IMR-90 (cell line): ENCODE measurements at regions of chr11 and their contacts with region 1.

Region 1: GRCh38 chr11:8717876-8718753 is 35.5 kb downstream of the RPL27A start:
- DNase-seq: peak; percentile 97
- ATAC-seq: peak; percentile 44
- H3K4me3 ChIP-seq: peak overlapping the region; percentile 19; the same call in 1 of the 2 replicates
- H3K27ac ChIP-seq: peak overlapping the region; percentile 99
- H3K4me1 ChIP-seq: peaks cover 62% of the 10 kb centered on the region
- H3K27me3 ChIP-seq: no peaks in the 10 kb centered on the region
- CTCF ChIP-seq: no peak
- POLR2A ChIP-seq: peak; percentile 60; the same call in 1 of the 2 replicates
- RAD21 ChIP-seq: no peak; the same call in 1 of the 2 replicates

Region 2: GRCh38 chr11:8652140-8652539 is 66.0 kb before region 1 on chr11:
- CTCF ChIA-PET with region 1: no interaction called
- POLR2A ChIA-PET with region 1: no interaction called
- dilution Hi-C with region 1: no loop called
- in situ Hi-C with region 1: no loop called
- intact Hi-C with region 1: loop called (anchors 2 kb)
- DNase-seq: peak; percentile 99
- ATAC-seq: peak; percentile 92
- H3K4me3 ChIP-seq: no peak overlapping the region
- H3K27ac ChIP-seq: no peak overlapping the region
- H3K4me1 ChIP-seq: peaks cover 12% of the 10 kb centered on the region
- H3K27me3 ChIP-seq: no peaks in the 10 kb centered on the region
- CTCF ChIP-seq: no peak
- POLR2A ChIP-seq: no peak
- RAD21 ChIP-seq: no peak

Region 3: GRCh38 chr11:8688414-8689362 is 29.4 kb before region 1 on chr11:
- CTCF ChIA-PET with region 1: interaction called, 4 read pairs
- POLR2A ChIA-PET with region 1: interaction called, 3 read pairs
- dilution Hi-C with region 1: no loop called
- in situ Hi-C with region 1: no loop called
- intact Hi-C with region 1: loop called (anchors 2 kb)
- DNase-seq: peak; percentile 96
- ATAC-seq: peak; percentile 89
- H3K4me3 ChIP-seq: peak overlapping the region; percentile 52
- H3K27ac ChIP-seq: peak overlapping the region; percentile 77
- H3K4me1 ChIP-seq: peaks cover 7% of the 10 kb centered on the region
- H3K27me3 ChIP-seq: no peaks in the 10 kb centered on the region
- CTCF ChIP-seq: peak; percentile 20; the same call in 1 of the 2 replicates
- POLR2A ChIP-seq: peak; percentile 80
- RAD21 ChIP-seq: peak; percentile 40

Region 4: GRCh38 chr11:8768625-8769333 is 50.7 kb after region 1 on chr11:
- CTCF ChIA-PET with region 1: interaction called, 9 read pairs
- POLR2A ChIA-PET with region 1: interaction called, 3 read pairs
- dilution Hi-C with region 1: no loop called
- in situ Hi-C with region 1: no loop called
- intact Hi-C with region 1: loop called (anchors 5 kb)
- DNase-seq: peak; percentile 89
- ATAC-seq: peak; percentile 68
- H3K4me3 ChIP-seq: no peak overlapping the region
- H3K27ac ChIP-seq: peak overlapping the region; percentile 66
- H3K4me1 ChIP-seq: peaks cover 49% of the 10 kb centered on the region
- H3K27me3 ChIP-seq: no peaks in the 10 kb centered on the region
- CTCF ChIP-seq: peak; percentile 50
- POLR2A ChIP-seq: no peak
- RAD21 ChIP-seq: peak; percentile 67

Region 5: DNA sequence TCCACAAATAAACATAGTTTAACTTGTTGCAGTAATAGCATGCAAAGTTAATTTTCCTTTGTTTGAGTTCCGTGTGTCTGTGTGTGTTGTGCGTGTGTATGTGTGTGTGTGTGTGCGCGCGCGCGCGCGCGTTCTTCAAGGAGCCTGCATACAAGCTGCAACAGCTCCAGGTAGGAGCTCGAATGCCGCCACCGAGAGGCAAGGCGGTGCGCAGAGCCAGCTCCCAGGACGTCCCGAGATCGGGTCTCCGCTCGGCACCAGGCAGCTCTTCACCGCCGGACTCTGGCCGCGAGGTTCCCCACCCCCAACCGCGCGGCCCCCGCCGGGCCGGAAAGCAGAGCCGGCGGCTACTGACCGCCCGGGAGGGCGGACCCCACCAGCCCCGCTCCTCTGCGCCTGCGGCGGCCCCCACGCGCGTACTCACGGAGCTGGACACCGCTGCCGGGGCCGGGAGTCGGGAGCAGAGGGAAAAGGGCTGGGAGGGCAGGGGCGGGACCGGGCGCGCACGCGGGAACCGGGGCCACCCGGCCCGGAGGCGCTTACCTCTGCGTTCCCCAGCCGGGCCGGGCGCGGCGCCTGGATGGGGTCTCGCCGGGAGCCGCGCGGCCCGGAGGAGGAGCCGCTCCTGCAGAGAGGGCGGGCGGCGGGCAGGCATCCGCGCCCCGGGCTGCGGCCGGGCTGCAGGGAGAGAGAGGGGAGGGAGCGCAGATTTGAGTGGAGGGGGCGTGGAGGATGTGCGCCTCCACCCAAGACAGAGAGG is 152.5 kb after region 1 on chr11:
- CTCF ChIA-PET with region 1: no interaction called
- POLR2A ChIA-PET with region 1: no interaction called
- dilution Hi-C with region 1: no loop called
- in situ Hi-C with region 1: no loop called
- intact Hi-C with region 1: loop called (anchors 5 kb)
- DNase-seq: peak; percentile 75
- ATAC-seq: peak; percentile 79
- H3K4me3 ChIP-seq: peak overlapping the region; percentile 51
- H3K27ac ChIP-seq: peak overlapping the region; percentile 78
- H3K4me1 ChIP-seq: peaks cover 12% of the 10 kb centered on the region
- H3K27me3 ChIP-seq: no peaks in the 10 kb centered on the region
- CTCF ChIP-seq: no peak
- POLR2A ChIP-seq: no peak
- RAD21 ChIP-seq: no peak

Region 6: GRCh38 chr11:8911029-8911826 is 193.1 kb after region 1 on chr11 and contains the start of gene AKIP1:
- CTCF ChIA-PET with region 1: no interaction called
- POLR2A ChIA-PET with region 1: no interaction called
- dilution Hi-C with region 1: no loop called
- in situ Hi-C with region 1: no loop called
- intact Hi-C with region 1: loop called (anchors 10 kb)
- DNase-seq: peak; percentile 94
- ATAC-seq: peak; percentile 92
- H3K4me3 ChIP-seq: peak within 1 kb of the TSS; percentile 91
- H3K27ac ChIP-seq: peak within 1 kb of the TSS; percentile 97
- H3K4me1 ChIP-seq: peaks cover 11% of the 10 kb centered on the region
- H3K27me3 ChIP-seq: no peaks in the 10 kb centered on the region
- CTCF ChIP-seq: no peak
- POLR2A ChIP-seq: 0 out of 2 replicates have a peak, but pooled peaks have one; percentile 24
- RAD21 ChIP-seq: 0 out of 2 replicates have a peak, but pooled peaks have one; percentile 3
- total RNA-seq, gene AKIP1: 27.8 and 33.9 TPM in 2 replicates